GM23248 (cell line): ENCODE measurements at regions of chr10 and their contacts with region 1.

Region 1: DNA sequence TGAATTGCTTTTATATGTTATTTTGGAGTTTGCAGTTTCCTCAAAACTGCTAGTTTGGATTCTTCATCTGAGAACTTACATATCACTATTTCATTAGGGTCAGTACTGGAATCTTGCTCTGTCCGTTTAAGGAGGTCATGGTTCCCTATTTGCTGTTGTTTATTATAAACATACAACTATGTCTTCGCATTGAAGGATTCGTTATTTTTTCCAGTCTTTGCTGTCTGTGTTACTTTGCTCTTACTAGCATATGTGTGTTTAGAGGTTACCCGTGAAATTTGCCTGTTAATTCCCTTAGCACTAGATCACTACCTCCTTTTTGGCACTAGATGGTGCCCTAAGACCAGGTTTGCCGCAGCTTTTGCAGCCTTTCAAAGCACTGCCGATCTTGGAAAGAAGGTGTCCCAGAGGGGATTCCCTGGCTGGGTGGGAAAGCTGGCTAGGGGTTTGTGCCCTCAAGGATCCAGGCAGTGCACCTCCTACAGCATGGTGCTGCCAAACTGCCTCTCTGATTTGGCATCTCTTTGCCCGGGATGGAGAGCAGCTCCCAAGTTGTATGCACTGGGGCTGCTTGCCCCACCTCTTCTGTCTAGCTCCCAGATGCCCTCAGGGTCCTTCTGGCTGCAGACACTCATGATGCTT is 103.1 kb upstream of the APBB1IP start:
- DNase-seq: peak; percentile 83
- H3K4me3 ChIP-seq: peak overlapping the region; percentile 59
- H3K27ac ChIP-seq: no peak overlapping the region
- H3K4me1 ChIP-seq: peaks cover 4% of the 10 kb centered on the region; the same call in 1 of the 2 replicates
- H3K27me3 ChIP-seq: no peaks in the 10 kb centered on the region

Region 2: DNA sequence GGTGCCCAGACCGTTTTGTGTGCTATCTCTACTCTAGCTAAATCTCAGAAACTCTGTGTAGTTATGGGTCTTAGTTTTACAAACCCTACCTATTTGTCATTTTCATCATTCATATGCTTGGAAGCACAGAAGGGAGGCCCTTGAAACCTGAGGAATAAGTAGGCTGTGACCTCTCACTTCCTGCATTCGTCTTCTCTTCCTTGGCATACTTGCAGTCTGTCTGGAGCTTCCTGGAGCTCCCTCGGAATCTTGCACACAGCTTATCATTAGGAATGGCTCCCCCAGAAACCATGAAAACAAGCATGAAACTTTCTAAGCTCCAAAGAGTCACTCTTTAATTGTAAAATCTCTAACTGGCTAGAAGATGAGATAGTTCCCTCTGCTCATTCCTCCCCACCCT is 777.9 kb before region 1 on chr10:
- in situ Hi-C with region 1: no loop called
- DNase-seq: no peak
- H3K4me3 ChIP-seq: no peak overlapping the region
- H3K27ac ChIP-seq: no peak overlapping the region
- H3K4me1 ChIP-seq: no peaks in the 10 kb centered on the region
- H3K27me3 ChIP-seq: no peaks in the 10 kb centered on the region

Region 3: DNA sequence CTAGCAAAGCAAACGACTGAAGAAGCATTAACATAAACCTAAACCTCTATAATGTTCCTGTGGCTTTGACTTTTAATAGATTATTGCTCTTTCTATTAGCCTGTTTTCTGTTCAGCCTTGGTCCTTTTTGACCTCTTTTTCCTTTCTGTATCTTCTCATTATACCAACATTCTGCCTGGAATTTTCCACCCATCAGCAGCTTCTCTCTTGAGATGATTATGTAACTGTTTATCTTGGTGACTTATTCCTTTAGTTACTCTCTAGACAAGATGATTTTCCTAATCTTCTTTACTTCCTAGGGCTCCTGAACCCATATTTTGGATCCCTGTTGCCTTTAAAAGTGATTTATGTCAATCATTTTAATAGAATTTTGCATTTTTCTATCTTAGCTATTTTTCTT is 320.0 kb before region 1 on chr10:
- in situ Hi-C with region 1: no loop called
- DNase-seq: no peak
- H3K4me3 ChIP-seq: no peak overlapping the region
- H3K27ac ChIP-seq: no peak overlapping the region
- H3K4me1 ChIP-seq: no peaks in the 10 kb centered on the region
- H3K27me3 ChIP-seq: no peaks in the 10 kb centered on the region

Region 4: DNA sequence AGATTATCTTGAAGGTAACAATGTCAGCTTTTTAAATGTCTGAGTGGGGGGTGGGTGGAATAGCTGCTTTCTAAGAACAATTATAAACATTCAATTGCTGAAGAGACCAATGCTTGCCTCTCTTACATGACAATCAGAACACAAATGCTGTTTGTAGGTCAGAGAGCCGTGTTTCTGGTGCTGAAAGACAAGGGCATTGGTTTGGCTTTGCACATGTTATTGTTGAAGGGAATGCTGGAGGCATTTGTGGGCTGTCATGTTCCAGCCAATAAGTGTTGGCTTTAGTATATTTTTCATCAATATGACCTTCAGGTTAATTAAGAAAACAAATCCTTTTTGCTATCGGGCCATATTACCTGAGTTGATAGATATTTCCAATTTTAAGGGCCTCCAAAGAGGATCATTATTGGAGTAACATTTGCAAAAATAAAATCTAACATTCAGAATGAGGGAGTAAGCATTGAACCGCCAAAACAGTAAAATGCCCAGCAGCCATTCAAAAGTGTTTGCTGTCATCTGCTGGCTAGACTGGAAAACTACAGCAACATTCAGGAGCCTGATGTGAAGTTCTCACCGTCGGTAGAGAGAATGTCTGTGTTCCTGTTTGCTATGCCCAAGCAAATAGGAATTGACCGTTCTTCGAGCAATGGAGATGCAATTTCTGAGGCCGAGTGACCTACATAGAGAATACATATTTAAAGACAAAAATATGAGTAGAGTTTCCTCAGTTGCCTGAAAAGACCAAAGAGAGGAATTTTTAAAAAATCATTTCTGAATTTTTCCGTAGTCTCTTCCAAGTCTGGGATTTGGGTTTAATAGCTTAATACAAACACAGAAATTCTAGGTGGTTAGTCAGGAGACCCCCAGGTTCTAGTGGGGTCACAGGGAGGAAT is 221.9 kb after region 1 on chr10:
- in situ Hi-C with region 1: loop called (anchors 10 kb)
- DNase-seq: peak; percentile 83
- H3K4me3 ChIP-seq: peak overlapping the region; percentile 60
- H3K27ac ChIP-seq: peak overlapping the region; percentile 79
- H3K4me1 ChIP-seq: peaks cover 27% of the 10 kb centered on the region
- H3K27me3 ChIP-seq: no peaks in the 10 kb centered on the region

Region 5: GRCh38 chr10:26697163-26697921 is 362.3 kb after region 1 on chr10 and contains the start of gene PDSS1:
- in situ Hi-C with region 1: loop called (anchors 25 kb)
- DNase-seq: peak; percentile 84
- H3K4me3 ChIP-seq: peak within 1 kb of the TSS; percentile 93
- H3K27ac ChIP-seq: peak within 1 kb of the TSS; percentile 44
- H3K4me1 ChIP-seq: peaks cover 8% of the 10 kb centered on the region
- H3K27me3 ChIP-seq: no peaks in the 10 kb centered on the region
- total RNA-seq, gene PDSS1: 4.0 and 5.1 TPM in 2 replicates

Region 6: DNA sequence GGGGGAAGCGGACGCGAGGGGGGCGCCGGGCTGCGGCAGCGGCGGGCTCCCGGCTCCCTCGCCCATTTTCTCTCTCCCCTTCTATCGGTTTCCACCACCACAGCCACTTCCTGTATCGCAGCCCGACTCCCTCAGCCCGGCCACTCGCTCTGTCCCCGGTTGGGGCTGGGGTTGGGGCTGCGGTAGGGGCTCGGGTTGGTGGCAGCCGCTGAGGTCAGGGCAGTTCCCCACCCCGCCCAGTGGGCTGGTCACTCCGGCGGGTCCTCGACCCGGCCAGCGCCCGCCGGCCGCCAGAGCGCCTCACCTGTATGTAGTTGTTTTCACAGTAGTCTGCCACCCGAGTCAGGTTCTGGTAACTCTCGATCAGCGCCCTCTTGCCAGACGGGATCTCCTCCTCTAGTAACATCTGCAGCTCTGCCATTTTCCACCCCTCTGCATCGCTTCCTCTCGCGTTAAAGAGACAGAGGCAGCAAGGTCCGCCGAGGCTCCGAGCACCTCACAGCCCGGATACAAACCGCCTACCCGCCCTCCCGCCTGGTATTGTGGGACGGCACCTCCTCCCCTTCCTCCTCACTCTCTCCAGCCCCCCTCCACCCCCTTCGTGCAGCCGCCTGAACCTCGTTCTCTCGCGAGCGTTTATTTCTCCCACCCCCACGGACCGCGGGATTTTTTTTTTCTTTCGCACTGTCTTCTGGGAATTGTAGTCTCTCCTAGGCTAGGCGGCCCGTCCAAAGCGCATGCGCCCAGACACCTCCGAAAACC is 525.6 kb after region 1 on chr10 and contains the start of gene ABI1:
- in situ Hi-C with region 1: loop called (anchors 10 kb)
- DNase-seq: peak; percentile 98
- H3K4me3 ChIP-seq: peak within 1 kb of the TSS; percentile 98
- H3K27ac ChIP-seq: peak within 1 kb of the TSS; percentile 89
- H3K4me1 ChIP-seq: peaks cover 24% of the 10 kb centered on the region
- H3K27me3 ChIP-seq: no peaks in the 10 kb centered on the region
- total RNA-seq, gene ABI1: 60.3 and 68.2 TPM in 2 replicates